PC-9 (cell line): ENCODE measurements at regions of chr10 and their contacts with region 1.

Region 1: DNA sequence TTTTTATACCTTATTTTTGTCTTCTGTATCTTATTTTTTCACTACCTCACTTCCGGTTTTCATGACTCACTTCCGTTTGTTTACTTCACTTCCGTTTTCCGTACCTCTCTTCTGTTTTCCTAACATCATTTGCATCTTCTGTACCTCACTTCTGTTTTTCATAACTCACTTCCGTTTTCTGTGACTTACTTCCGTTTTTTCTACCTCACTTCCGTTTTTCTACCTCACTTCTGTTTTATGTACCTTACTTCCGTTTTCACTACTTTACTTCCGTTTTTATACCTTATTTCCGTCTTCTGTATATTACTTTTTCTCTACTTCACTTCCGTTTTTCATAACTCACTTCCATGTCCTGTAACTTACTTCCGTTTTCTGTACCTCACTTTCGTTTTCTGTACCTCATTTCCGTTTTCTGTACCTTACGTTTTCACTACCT is 492.5 kb upstream of the AKR1E2 start:
- DNase-seq: no peak
- H3K4me3 ChIP-seq: no peak overlapping the region
- H3K27ac ChIP-seq: no peak overlapping the region
- H3K4me1 ChIP-seq: peaks cover 14% of the 10 kb centered on the region
- H3K27me3 ChIP-seq: no peaks in the 10 kb centered on the region
- CTCF ChIP-seq: no peak

Region 2: GRCh38 chr10:3805791-3806461 is 527.6 kb before region 1 on chr10:
- CTCF ChIA-PET with region 1: no interaction called
- POLR2A ChIA-PET with region 1: interaction called, 10 read pairs
- intact Hi-C with region 1: no loop called
- DNase-seq: peak; percentile 79 to 83
- H3K4me3 ChIP-seq: peak overlapping the region; percentile 25; the same call in 1 of the 2 replicates
- H3K27ac ChIP-seq: peak overlapping the region; percentile 96
- H3K4me1 ChIP-seq: peaks cover 66% of the 10 kb centered on the region
- H3K27me3 ChIP-seq: no peaks in the 10 kb centered on the region
- CTCF ChIP-seq: no peak